Activated CD8-positive, alpha-beta T cell treated with anti-CD3 and anti-CD28 coated beads, Interleukin-2, amount 10 ng/mL, durations not matched to agents 7 days and 5 days (primary cell): ENCODE measurements at regions of chr1 and their contacts with region 1.

Region 1: DNA sequence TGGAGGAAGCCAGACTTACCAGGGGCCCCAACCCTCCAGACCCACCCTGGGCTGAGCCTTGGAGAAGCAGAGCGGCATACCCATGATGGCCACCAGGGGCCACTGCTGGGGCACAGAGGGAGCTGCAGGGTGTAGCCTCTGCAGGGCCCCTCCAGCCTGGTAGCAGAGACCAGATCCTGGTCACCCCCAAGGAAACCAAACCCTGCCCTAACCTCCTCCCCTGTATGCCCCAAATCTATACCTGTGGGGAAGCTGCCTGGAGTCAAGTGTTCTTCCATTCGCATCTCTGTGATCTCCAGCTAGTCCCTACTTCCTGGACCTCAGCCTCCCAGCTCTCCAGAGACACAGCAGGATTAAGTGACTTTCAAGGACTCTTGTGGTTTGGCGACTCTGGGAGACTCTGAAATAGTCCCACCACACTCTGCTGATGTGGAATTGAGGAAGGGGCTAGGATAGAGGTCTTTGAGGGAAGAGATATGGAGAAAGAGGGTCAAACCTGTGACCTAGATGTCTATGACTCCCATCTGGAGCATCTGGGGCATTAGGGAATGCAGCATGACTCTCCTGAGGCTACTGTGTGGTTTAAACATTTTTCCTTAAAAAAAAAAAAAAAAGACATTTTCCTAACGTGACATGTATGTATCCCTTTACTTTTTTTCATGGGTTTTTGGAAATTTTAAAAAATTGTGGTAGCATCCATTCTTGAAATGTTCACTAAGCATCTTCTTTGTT is 119.2 kb upstream of the IPO9 start:
- DNase-seq: peak; percentile 70
- ATAC-seq: peak; percentile 96
- H3K4me3 Mint-ChIP-seq: no peak overlapping the region
- H3K27ac Mint-ChIP-seq: no peak overlapping the region
- H3K4me1 Mint-ChIP-seq: no peaks in the 10 kb centered on the region
- H3K27me3 Mint-ChIP-seq: no peaks in the 10 kb centered on the region

Region 2: GRCh38 chr1:201488817-201489589 is 220.7 kb before region 1 on chr1:
- CTCF ChIA-PET with region 1: no interaction called
- POLR2A ChIA-PET with region 1: no interaction called
- DNase-seq: no peak
- ATAC-seq: no peak
- H3K4me3 Mint-ChIP-seq: no peak overlapping the region
- H3K27ac Mint-ChIP-seq: no peak overlapping the region
- H3K4me1 Mint-ChIP-seq: peaks cover 13% of the 10 kb centered on the region
- H3K27me3 Mint-ChIP-seq: no peaks in the 10 kb centered on the region

Region 3: GRCh38 chr1:201719812-201720521 is 10.2 kb after region 1 on chr1:
- CTCF ChIA-PET with region 1: interaction called, 13 read pairs
- POLR2A ChIA-PET with region 1: no interaction called
- DNase-seq: no peak
- ATAC-seq: no peak
- H3K4me3 Mint-ChIP-seq: no peak overlapping the region
- H3K27ac Mint-ChIP-seq: no peak overlapping the region
- H3K4me1 Mint-ChIP-seq: no peaks in the 10 kb centered on the region
- H3K27me3 Mint-ChIP-seq: peaks cover 4% of the 10 kb centered on the region

Region 4: GRCh38 chr1:201739492-201740085 is 29.9 kb after region 1 on chr1:
- CTCF ChIA-PET with region 1: interaction called, 10 read pairs
- POLR2A ChIA-PET with region 1: no interaction called
- DNase-seq: peak; percentile 45
- ATAC-seq: peak; percentile 86
- H3K4me3 Mint-ChIP-seq: peak overlapping the region; percentile 59
- H3K27ac Mint-ChIP-seq: no peak overlapping the region
- H3K4me1 Mint-ChIP-seq: peaks cover 13% of the 10 kb centered on the region
- H3K27me3 Mint-ChIP-seq: peaks cover 50% of the 10 kb centered on the region

Region 5: DNA sequence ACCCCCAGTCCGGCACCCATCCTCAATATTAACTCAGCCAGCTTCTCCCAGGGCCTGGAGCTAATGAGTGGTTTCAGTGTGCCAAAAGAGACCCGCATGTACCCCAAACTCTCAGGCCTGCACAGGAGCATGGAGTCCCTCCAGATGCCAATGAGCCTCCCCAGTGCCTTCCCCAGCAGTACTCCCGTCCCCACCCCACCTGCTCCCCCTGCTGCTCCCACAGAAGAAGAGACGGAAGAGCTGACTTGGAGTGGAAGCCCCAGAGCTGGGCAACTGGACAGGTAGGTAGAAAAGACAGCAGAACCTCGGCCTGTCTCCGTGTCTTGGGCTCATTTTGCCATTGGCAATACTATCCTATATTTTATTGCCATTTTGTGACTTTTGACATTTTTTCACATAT is 73.8 kb after region 1 on chr1:
- CTCF ChIA-PET with region 1: interaction called, 18 read pairs
- POLR2A ChIA-PET with region 1: no interaction called
- DNase-seq: no peak
- ATAC-seq: no peak
- H3K4me3 Mint-ChIP-seq: no peak overlapping the region
- H3K27ac Mint-ChIP-seq: no peak overlapping the region
- H3K4me1 Mint-ChIP-seq: no peaks in the 10 kb centered on the region
- H3K27me3 Mint-ChIP-seq: peaks cover 3% of the 10 kb centered on the region

Region 6: DNA sequence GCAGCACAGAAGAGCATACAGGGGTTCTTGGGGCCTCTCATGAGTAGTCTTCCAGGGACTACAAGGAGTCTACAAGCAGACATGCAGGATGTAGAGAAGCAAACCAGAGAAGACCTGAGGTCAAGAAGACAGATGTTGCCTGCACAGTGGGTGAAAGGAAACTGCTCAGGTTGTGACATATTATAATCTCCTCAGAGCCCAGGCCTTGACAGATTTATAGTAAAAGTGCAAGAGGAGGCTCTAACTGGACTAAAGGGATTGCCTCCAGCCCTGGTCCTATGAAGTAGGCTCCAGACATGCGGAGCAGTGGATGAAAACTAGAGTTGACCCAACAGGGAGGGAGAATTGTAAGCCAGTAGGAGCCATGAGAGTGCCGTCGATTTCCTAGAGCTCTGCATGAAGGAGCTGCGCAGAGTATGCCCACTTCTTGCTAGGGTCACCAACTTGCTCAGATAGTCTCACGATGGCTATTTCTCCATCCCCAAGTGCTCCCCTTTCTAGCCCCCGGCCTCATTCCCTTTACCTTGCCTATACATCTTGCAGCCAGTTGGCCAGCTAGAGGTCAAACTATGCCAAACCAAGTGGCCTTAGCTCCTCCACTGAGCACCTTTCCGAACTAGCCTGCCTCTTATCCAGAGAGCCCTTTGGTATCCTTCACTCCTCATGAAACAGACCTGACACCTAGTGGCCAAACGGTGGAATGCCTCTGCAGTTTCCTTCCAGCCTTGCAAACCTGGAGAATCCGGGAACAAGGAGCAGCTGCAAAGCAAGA is 83.0 kb after region 1 on chr1:
- CTCF ChIA-PET with region 1: interaction called, 150 read pairs
- POLR2A ChIA-PET with region 1: no interaction called
- DNase-seq: peak; percentile 65
- ATAC-seq: peak; percentile 78
- H3K4me3 Mint-ChIP-seq: no peak overlapping the region
- H3K27ac Mint-ChIP-seq: no peak overlapping the region
- H3K4me1 Mint-ChIP-seq: peaks cover 24% of the 10 kb centered on the region
- H3K27me3 Mint-ChIP-seq: peaks cover under 1% of the 10 kb centered on the region